Activated CD4-positive, alpha-beta T cell treated with anti-CD3 and anti-CD28 coated beads for 36 hours (primary cell): ENCODE measurements at regions of chr2 and their contacts with region 1.

Region 1: DNA sequence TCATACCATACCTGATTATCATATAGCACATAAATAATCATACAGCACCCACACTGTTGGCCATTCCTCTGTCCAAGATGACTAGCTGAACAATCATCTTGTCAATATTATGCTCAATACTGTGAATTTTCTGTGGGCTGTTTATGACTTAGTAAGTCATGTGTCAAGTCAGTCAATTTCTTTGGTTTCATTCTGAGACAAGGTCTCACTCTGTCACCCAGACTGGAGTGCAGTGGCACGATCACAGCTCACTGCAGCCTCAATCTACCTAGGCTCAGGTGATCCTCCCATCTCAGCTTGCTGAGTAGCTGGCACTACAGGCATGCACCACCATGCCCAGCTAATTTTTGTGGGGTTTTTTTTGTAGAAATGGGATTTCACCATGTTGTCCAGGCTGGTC is 5.7 kb downstream of the MCM6 start:
- DNase-seq: peak; percentile 38
- ATAC-seq: peak; percentile 80
- H3K4me3 Mint-ChIP-seq: no peak overlapping the region
- H3K27ac Mint-ChIP-seq: peak overlapping the region; percentile 40
- H3K4me1 Mint-ChIP-seq: peaks cover 56% of the 10 kb centered on the region
- H3K27me3 Mint-ChIP-seq: no peaks in the 10 kb centered on the region

Region 2: GRCh38 chr2:135843671-135844070 is 26.9 kb before region 1 on chr2:
- CTCF ChIA-PET with region 1: interaction called, 10 read pairs
- POLR2A ChIA-PET with region 1: no interaction called
- intact Hi-C with region 1: loop called in 1 of 2 experiments (anchors 2 kb)
- DNase-seq: no peak
- ATAC-seq: no peak
- H3K4me3 Mint-ChIP-seq: no peak overlapping the region
- H3K27ac Mint-ChIP-seq: no peak overlapping the region
- H3K4me1 Mint-ChIP-seq: peaks cover 6% of the 10 kb centered on the region
- H3K27me3 Mint-ChIP-seq: no peaks in the 10 kb centered on the region

Region 3: DNA sequence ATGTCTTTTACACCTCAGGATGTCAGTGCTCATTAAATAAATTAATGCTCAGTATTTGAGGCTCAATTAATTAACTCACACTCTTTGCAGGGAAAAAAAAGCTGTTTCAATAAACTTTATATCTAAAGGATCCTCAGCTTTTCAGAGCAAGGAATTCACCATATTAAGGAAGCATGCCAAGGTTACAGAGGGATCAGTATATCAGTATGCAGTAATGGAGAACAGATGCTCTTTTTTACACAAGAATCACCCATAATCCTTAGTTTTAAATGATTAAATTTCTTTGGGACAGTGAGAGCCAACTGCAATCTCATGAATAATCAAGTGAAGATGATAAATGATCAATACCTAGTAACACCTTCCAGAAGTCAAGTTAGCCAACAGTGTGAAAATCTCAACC is 18.7 kb before region 1 on chr2:
- CTCF ChIA-PET with region 1: interaction called, 3 read pairs
- POLR2A ChIA-PET with region 1: interaction called, 4 read pairs
- intact Hi-C with region 1: loop called in 1 of 2 experiments (anchors 2 kb)
- DNase-seq: no peak
- ATAC-seq: no peak
- H3K4me3 Mint-ChIP-seq: no peak overlapping the region
- H3K27ac Mint-ChIP-seq: no peak overlapping the region
- H3K4me1 Mint-ChIP-seq: peaks cover 12% of the 10 kb centered on the region
- H3K27me3 Mint-ChIP-seq: no peaks in the 10 kb centered on the region